ENCODE measurements at regions of chr4 and their contacts with region 1.

Region 1: DNA sequence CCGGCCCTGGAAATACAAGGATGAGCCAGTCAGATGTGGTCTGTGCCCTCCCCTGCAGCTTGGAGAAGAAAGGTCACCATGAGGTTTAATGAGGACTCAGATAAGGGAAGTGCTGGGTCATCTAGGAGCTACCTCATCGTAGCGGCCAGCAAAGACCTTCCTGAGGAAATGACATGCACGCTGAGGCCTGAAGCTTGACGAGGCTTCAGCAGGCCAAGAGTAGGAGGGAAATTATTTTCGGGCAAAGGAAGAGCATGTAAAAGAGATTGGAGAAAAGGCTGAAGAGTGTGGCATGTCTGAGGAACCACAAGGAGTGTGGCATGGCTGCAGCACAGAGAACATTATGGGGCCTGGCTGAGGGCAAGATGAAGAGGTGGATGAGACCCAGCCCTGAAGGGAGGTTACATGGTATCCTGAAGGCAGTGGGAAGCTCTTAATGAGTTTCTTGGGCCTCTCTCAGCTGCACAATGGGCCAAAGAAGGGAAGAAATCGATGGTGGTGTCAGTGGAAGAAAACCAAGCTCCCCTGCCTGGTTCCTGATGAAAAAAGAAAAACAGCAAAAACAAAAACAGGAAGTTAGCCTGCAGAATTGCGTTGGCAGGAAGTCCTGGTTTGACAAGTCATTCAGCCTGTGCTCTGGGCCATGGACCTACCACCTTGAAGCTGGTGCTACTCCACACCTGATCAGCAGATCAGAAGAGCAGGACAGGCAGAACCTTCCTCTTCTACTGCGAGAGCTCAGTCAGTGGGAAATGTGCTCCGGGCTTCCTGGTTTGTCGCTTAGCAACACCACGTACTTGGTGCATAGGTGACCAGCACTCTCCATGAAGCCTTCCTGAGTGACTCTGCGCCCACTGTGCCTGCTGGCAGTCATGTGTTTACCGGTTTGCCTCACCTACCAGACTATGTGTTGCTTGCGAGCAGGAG is 134.5 kb upstream of the KLF3 start:
- DNase-seq: peak; percentile 83 to 95 (median 88)
- ATAC-seq: peak; percentile 95
- H3K4me3 ChIP-seq: no peak overlapping the region
- H3K27ac ChIP-seq: peak overlapping the region; percentile 98
- H3K4me1 ChIP-seq: peaks cover 22 to 34% of the 10 kb centered on the region in 2 experiments
- H3K27me3 ChIP-seq: no peaks in the 10 kb centered on the region
- CTCF ChIP-seq: peak in 1 of 3 experiments; percentile 14; a peak in 1 of 6 replicates
- EP300 ChIP-seq: peak; percentile 91
- POLR2A ChIP-seq: peak; percentile 71
- RAD21 ChIP-seq: peak; percentile 36 to 45

Region 2: DNA sequence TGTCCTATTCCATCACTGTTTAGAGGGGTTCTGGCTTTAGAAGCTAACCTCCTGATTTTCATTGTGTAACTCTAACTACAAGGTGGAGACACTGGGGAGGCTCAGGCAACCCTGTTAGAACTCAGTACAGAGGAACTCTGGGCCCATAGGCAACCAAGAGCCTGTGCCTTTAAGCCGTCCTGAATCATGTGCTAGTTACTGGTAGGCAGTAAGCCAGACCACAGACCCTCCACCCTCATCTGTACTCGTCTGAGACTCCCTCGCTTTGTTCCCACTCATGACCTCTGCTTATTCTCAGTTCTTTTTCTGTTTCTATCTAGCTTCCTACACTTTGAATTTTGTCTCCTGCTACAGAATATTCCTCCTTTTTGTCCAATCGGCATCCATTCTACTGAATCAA is 607.1 kb before region 1 on chr4:
- CTCF ChIA-PET with region 1: no interaction called
- POLR2A ChIA-PET with region 1: no interaction called
- in situ Hi-C with region 1: no loop called
- intact Hi-C with region 1: no loop called
- DNase-seq: no peak
- ATAC-seq: no peak
- H3K4me3 ChIP-seq: no peak overlapping the region
- H3K27ac ChIP-seq: no peak overlapping the region
- H3K4me1 ChIP-seq: no peaks in the 10 kb centered on the region
- H3K27me3 ChIP-seq: peaks cover 17 to 27% of the 10 kb centered on the region in 2 experiments
- CTCF ChIP-seq: no peak
- EP300 ChIP-seq: no peak
- POLR2A ChIP-seq: no peak
- RAD21 ChIP-seq: no peak

Region 3: GRCh38 chr4:38302910-38303309 is 226.5 kb before region 1 on chr4:
- CTCF ChIA-PET with region 1: no interaction called
- POLR2A ChIA-PET with region 1: no interaction called
- in situ Hi-C with region 1: no loop called
- intact Hi-C with region 1: no loop called
- DNase-seq: no peak
- ATAC-seq: peak; percentile 36; the same call in 2 of the 3 replicates
- H3K4me3 ChIP-seq: no peak overlapping the region
- H3K27ac ChIP-seq: no peak overlapping the region
- H3K4me1 ChIP-seq: no peaks in the 10 kb centered on the region
- H3K27me3 ChIP-seq: no peaks in the 10 kb centered on the region
- CTCF ChIP-seq: no peak
- EP300 ChIP-seq: no peak
- POLR2A ChIP-seq: no peak
- RAD21 ChIP-seq: no peak

Region 4: DNA sequence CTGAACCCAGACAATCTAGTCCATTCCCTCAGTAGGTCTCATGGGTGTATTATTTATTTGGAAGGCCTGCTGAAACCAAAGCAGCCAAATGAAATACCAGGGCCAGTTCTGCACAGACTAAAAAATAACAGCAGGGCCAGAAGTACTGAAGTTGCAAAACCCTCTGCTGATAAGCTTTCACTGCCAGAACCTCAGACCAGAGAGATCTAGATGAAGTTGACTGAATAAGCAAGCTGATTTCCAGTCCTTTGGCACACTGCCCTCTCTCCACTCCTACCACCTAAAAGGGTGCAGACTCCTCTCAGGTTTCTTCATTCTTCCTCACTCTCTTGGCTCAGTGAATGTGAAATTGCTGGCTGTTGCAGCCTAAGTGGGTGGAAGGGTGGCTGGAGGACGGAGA is 142.1 kb before region 1 on chr4:
- CTCF ChIA-PET with region 1: no interaction called
- POLR2A ChIA-PET with region 1: no interaction called
- in situ Hi-C with region 1: no loop called
- intact Hi-C with region 1: loop called (anchors 10 kb)
- DNase-seq: peak in 2 of 4 experiments; percentile 35 to 66
- ATAC-seq: peak; percentile 28
- H3K4me3 ChIP-seq: no peak overlapping the region
- H3K27ac ChIP-seq: no peak overlapping the region
- H3K4me1 ChIP-seq: peaks cover 9 to 48% of the 10 kb centered on the region in 2 experiments
- H3K27me3 ChIP-seq: no peaks in the 10 kb centered on the region
- CTCF ChIP-seq: no peak
- EP300 ChIP-seq: no peak
- POLR2A ChIP-seq: no peak
- RAD21 ChIP-seq: peak in 1 of 2 experiments; percentile 10; a peak in 1 of 4 replicates

Region 5: DNA sequence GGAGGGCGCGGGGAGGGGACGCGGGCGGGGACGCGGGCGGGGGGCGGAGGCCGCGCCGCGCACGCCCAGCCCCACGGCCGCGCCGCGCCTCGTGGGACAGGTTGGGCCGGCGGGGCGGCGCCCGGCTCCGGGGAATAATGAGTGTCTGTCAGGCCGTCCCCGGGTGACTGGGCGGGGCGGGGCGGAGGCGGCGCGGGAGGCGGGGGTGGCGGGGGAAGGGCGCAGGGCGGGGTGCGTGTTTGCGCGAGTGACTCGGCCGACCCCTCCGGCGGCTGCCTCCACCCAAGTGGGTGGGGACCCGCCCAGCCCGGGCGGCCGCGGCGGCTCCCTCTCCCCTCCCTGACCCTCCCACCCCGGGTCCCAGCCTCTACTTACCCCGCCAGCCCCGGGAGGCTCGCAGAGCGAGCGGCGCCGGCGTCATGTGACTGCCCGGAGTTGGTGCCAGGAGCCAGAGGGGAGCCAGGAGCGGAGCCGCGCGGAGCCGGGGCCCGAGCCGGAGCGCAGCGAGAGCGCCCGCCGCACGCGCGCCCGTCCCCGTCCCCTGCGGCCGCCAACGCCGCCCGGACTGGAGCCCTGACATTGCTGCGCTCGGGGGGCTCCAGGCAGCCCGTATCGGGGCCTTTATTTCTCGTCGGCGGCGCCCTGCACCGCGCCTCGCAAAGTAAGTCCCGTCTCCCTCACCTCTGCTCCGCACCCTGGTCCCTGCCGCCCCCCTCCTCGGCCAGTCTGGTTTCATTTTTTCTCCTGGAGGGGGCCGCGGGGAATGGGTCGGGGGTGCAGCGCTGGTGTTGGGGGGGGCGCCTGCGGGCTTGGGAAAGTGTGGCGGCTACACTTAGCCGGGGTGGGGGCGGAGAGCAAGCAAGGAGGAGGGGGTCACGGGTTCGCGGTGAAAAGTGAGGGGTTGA is 134.6 kb after region 1 on chr4 and contains the start of gene KLF3:
- CTCF ChIA-PET with region 1: no interaction called
- POLR2A ChIA-PET with region 1: interaction called, 7 read pairs
- in situ Hi-C with region 1: no loop called
- intact Hi-C with region 1: loop called (anchors 2 kb)
- DNase-seq: peak; percentile 88 to 92 (median 90)
- ATAC-seq: peak; percentile 68
- H3K4me3 ChIP-seq: peak within 1 kb of the TSS; percentile 92
- H3K27ac ChIP-seq: peak within 1 kb of the TSS; percentile 98
- H3K4me1 ChIP-seq: peaks cover 17 to 33% of the 10 kb centered on the region in 2 experiments
- H3K27me3 ChIP-seq: no peaks in the 10 kb centered on the region
- CTCF ChIP-seq: no peak
- EP300 ChIP-seq: no peak
- POLR2A ChIP-seq: no peak; the same call in none of the 2 replicates
- RAD21 ChIP-seq: no peak
- polyA plus RNA-seq, gene KLF3: 9.9 to 16.8 TPM